ENCODE measurements at regions of chrX and their contacts with region 1.

Region 1: DNA sequence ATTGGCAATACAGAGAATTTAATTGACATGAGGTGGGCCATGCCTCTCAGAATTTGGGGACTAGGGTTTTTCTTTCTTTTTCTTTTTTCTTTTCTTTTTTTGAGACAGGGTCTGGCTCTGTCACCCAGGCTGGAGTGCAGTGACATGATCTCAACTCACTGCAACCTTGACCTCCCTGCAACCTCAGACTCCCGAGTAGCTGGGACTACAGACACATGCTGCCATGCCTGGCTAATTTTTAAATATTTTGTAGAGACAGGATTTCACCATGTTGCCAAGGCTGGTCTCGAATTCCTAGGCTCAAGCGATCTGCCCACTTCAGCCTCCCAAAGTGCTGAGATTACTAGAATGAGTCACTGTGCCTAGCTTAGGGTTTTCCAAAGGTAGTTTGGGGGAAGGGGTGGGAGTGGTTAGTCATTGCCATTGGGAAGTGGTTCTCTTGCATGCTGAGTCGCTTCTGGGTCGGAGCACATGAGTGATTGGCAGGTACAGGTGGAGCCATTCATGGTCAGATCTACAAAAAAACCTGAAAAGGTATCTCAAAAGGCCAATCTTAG is 54.5 kb downstream of the MID2 start:
- H3K4me3 ChIP-seq: no peak overlapping the region
- H3K27ac ChIP-seq: no peak overlapping the region
- H3K4me1 ChIP-seq: no peaks in the 10 kb centered on the region
- CTCF ChIP-seq: no peak

Region 2: DNA sequence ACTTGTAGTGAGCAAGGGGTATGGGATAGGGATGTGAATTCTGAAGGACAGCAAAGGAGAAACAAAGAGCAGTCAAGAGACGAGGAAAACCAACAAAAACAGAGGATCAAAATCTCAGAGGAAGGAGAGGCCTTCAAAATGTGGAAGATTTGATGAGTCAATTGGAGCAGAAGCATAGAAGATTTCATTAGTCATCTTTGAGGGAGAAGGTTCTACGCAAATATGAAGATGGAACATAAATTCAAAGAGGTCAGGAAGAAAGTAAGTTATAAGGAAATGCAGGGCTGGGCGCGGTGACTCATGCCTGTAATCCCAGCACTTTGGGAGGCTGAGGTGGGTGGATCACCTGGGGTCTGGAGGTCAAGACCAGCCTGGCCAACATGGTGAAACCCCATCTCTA is 19.1 kb before region 1 on chrX:
- CTCF ChIA-PET with region 1: no interaction called
- POLR2A ChIA-PET with region 1: no interaction called
- H3K4me3 ChIP-seq: no peak overlapping the region
- H3K27ac ChIP-seq: no peak overlapping the region
- H3K4me1 ChIP-seq: 0 out of 2 replicates have a peak, but pooled peaks cover 3% of the 10 kb centered on the region
- CTCF ChIP-seq: no peak

Region 3: GRCh38 chrX:107894038-107894437 is 13.9 kb after region 1 on chrX:
- CTCF ChIA-PET with region 1: interaction called, 16 read pairs
- POLR2A ChIA-PET with region 1: no interaction called
- H3K4me3 ChIP-seq: no peak overlapping the region
- H3K27ac ChIP-seq: no peak overlapping the region
- H3K4me1 ChIP-seq: no peaks in the 10 kb centered on the region
- CTCF ChIP-seq: peak; percentile 17; the same call in 1 of the 2 replicates

Region 4: DNA sequence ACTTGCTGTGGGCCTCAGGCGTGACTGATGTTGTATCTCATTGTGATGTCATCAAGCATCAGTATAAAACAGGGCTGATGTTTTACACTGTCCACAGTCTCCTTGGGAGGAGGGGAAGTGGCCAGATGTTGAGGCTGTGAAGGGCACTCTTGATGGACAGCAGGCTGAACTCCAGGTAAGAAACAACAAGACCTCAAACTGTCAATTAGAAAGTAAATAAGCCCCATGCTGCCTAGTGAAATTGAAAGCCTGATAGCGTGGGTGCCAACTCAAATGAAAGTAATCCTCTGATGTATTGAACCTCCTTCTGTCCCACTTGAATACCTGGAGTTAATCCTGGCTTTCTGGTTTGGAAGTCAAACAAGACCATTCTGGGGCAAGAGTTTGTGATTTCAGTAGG is 184.5 kb after region 1 on chrX:
- CTCF ChIA-PET with region 1: no interaction called
- POLR2A ChIA-PET with region 1: no interaction called
- H3K4me3 ChIP-seq: no peak overlapping the region
- H3K27ac ChIP-seq: no peak overlapping the region
- H3K4me1 ChIP-seq: no peaks in the 10 kb centered on the region
- CTCF ChIP-seq: no peak